ENCODE measurements at regions of chr11 and their contacts with region 1.

Region 1: DNA sequence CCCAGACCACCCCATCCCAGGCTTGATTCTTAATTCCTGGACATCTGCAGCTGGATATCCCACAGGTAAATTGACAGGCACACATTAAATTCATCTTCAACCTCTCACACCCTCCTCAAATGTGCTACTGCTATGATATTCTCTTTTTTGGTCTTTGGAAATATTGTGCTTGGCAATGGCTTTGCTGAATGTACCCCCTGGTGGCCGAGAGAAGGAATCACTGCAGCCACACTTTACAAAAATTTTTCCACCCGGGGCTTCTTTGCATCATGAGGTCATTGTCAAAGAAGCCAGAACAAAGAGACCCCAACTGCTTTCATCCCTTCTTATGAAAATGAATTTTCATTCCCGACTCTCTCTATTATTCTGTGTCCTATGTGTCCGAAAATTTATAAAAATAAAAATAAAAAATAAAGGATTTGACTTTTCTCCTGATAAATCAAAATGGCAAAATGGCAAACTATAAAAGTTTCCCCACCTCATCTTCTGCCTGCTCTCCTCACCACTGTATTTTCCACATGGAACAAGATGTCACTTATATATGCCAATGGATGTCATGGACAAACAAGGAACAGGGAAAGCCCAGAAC is 15.0 kb upstream of the CYB5R2 start:
- DNase-seq: no peak
- H3K4me3 ChIP-seq: no peak overlapping the region
- H3K27ac ChIP-seq: peak overlapping the region in 7 of 59 donors; percentile 24 to 49 (median 33)
- H3K27me3 ChIP-seq: peaks cover 0 to 3% (median 0%) of the 10 kb centered on the region in 45 donors
- CTCF ChIP-seq: peak; percentile 64 to 96 (median 88)

Region 2: DNA sequence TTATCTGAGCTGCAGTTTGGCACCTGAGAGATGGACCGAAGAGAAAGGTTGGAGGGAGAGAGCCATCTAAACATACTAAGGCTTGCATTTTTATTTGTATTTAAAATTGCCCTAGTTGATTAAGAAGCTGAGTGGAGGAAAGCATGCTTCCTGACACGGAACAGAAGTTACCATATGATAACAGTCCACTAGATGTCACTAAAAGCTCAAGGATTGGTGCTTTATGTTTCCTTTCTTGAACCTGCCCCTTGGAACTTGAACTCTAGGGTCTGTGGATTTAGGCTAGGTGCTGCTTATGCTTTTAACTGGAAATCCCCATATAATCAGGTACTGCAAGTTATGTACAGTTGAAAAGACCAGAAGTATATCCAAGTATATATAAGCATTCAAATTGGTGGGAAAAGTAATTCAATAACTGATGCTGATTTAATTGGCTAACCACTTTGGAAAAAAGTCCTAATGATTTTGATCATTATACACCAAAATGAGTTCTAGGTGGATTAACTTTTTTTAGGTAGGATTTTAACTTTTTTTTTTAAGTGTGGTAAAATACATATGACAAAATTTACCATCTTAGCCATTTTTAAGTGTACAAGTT is 590.0 kb before region 1 on chr11:
- intact Hi-C with region 1: loop called in 1 of 2 experiments (anchors 5 kb)
- DNase-seq: no peak
- H3K4me3 ChIP-seq: no peak overlapping the region
- H3K27ac ChIP-seq: no peak overlapping the region
- H3K27me3 ChIP-seq: peaks cover 0 to 2% (median 0%) of the 10 kb centered on the region in 45 donors
- CTCF ChIP-seq: peak; percentile 17 to 92 (median 72)

Region 3: DNA sequence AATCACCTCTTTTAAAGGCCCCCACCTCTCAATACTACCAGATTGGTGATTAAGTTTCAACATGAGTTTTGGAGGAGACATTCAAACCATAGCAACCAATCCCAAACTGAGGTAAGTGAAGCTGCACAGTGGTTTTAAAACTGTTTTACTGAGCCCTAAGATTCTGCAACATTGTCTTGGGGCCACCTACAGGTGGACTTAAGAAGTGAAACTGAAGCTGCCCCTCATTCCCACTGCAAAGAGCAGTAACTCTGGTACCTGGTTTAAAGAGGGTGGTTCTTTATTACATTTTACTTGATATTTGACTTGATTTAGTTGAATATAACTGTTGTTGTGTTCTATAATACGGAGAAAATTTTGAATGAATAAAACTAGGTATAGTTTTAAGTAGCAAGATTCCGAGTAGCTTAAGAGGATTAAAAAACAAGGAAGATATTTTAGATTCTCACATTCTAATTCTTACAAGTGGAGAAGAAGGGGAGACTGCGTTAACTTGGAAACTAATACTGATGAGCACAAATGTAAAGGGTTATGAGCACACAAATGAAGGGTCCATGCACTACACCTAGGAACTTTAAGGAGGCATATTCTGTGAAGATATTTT is 409.9 kb before region 1 on chr11:
- intact Hi-C with region 1: loop called in 1 of 2 experiments (anchors 10 kb)
- DNase-seq: no peak
- H3K4me3 ChIP-seq: no peak overlapping the region
- H3K27ac ChIP-seq: no peak overlapping the region
- H3K27me3 ChIP-seq: no peaks in the 10 kb centered on the region
- CTCF ChIP-seq: peak in 55 of 56 donors; percentile 32 to 79 (median 63)

Region 4: GRCh38 chr11:7467652-7468051 is 220.7 kb before region 1 on chr11:
- intact Hi-C with region 1: no loop called
- DNase-seq: no peak
- H3K4me3 ChIP-seq: no peak overlapping the region
- H3K27ac ChIP-seq: no peak overlapping the region
- H3K27me3 ChIP-seq: no peaks in the 10 kb centered on the region
- CTCF ChIP-seq: no peak

Region 5: DNA sequence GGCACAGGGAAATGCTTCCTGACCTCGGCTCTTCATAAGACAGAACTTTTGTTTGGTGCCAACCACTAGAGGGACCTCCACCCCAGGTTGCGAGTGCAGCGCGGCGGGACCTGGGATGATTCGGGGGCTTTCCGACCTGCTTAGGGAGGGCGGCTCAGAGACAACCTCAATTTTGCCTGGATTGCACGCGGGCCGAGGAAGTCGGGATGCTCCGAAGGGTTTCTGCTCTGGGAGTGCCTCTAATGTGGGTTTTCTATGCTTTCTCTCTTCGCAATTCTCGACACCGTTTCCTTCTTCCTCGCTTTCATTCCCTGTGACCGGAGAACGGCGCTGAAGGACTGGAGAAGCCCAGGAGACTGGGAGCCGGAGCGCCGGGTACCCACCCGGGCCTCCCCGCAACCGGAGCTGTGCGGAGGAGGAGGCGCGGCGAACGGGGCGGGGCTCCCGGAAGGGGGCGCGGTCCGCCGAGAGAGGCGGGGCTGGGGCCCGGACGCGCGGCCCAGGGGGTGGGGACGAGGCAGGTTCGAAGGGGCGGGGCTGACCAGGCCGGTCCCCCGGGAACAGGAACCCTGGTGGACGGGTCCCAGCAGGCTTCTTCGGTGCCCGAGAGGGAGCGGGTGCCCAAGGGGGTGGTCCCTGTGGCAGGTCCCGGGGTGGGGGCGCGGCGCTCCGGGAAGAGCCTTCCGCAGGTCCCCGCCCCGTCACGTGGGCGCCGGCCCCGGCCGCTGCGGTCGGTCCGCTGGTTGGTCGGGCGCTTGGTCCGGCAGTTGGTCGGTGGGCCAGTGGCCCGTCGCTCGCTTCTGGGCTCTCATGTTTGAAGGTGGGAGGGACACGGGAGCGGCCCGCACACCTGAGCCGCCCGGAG is 174.9 kb before region 1 on chr11 and contains the start of gene PPFIBP2:
- intact Hi-C with region 1: loop called in 1 of 2 experiments (anchors 5 kb)
- DNase-seq: peak; percentile 66 to 88 (median 78)
- H3K4me3 ChIP-seq: peak within 1 kb of the TSS; percentile 60 to 98 (median 87)
- H3K27ac ChIP-seq: peak within 1 kb of the TSS; percentile 82 to 99 (median 96)
- H3K27me3 ChIP-seq: no peaks in the 10 kb centered on the region
- CTCF ChIP-seq: peak in 55 of 56 donors; percentile 43 to 79 (median 67)
- total RNA-seq, gene PPFIBP2: 14.4 to 115 (median 35.6) TPM

Measured in dorsolateral prefrontal cortex (tissue), 120 donors.